ENCODE measurements at regions of chr20 and their contacts with region 1.

Region 1: DNA sequence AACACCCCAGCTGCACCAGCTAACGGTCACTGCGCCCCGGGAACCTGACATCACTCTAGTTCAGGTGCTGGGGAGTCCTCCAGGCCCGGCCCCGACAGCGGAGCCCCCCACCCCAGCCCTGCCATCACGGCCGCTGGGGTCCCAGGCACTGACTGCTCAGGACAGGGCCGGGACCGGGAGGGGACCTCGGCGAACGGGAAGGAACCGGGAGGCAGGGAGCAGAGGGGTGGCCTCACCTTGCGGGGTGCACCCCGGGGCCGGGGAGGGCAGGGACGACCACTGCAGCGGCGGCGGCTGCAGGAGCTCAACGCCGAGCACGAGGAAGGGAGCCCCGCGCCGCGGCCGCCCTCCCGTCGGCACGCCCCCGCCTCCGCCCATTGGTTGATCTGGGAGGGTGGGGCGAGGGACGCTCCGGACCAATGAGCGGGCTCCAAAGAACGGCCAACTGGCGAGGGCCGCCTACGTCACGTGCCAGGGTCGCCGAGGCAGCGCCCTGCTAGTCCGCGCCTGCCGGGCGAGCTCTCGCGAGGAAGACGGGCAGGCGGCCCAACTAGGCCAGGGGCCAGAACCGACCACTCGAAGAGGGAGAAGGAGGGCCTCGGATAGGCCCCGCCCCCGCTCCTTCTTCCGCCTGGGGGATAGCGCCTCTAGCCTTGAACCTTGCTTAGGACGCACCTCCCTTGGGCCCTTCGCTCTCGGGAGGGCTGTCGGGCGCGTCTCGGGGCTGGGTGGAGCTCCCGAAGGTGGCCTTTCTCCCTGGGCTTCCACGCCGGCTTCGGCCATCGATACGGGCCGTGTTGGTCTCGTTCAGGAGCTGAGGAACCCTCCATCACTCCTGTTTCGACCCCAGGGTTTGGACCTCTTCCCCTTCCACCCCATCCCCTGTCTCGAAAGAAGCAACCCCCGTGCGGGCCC is at the start of gene ADISSP:
- DNase-seq: peak; percentile 98
- H3K4me3 Mint-ChIP-seq: peak within 1 kb of the TSS; percentile 87
- H3K27ac Mint-ChIP-seq: peak within 1 kb of the TSS; percentile 92
- H3K4me1 Mint-ChIP-seq: peaks cover 20% of the 10 kb centered on the region
- H3K27me3 Mint-ChIP-seq: peaks cover 9% of the 10 kb centered on the region
- total RNA-seq, gene ADISSP: 55.5 and 64.6 TPM in 2 replicates

Region 2: DNA sequence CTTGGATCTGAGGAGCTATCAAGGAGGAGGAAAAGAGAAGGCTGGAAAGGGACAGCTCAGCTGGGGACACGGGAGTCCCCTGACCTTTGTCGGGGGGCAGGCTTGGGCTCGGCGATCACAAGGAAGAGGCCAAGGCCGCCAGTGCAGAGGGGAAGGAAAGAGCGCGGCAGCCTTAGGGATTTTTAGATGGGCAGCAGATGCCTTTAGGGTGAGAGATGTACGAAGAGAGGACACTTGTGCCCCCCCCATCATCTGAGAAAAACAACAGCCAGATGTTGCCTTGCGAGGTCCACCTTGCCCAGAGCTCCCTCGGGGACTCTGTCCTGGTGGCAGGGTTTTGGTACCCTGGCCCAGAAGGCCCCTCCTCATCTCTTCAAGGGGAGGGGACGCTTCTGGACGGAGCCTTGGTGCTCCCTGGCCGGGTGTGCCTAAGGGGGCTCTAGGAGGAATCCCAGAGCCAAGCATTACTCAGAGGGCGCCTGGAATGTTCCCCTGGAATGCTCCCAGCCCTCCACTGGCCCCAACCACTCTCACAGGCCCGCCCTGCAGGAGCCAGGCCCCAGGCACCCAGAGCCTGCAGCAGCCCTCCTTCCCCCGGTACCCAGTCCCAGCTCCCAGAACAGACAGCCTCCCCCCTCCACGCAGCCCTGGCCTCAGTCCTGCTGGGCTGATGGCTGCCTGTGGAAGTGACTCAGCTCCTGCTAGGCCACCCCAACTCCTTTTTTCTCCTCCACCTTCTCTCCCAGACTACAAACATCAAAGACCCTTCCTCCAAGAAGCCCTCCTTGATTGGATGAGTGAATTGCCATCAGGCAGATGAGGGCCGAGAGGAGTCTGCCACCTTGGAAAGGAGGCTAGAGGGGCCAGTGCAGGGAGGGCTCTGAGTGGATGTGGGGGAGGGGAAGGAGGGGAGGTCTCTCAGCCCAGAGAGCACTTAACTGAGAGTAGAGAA is 87.7 kb before region 1 on chr20:
- intact Hi-C with region 1: loop called (anchors 1 kb)
- DNase-seq: no peak
- H3K4me3 Mint-ChIP-seq: no peak overlapping the region
- H3K27ac Mint-ChIP-seq: no peak overlapping the region
- H3K4me1 Mint-ChIP-seq: peaks cover 5% of the 10 kb centered on the region
- H3K27me3 Mint-ChIP-seq: peaks cover 58% of the 10 kb centered on the region

Region 3: GRCh38 chr20:3706774-3707507 is 60.7 kb before region 1 on chr20:
- intact Hi-C with region 1: no loop called
- DNase-seq: no peak
- H3K4me3 Mint-ChIP-seq: no peak overlapping the region
- H3K27ac Mint-ChIP-seq: no peak overlapping the region
- H3K4me1 Mint-ChIP-seq: no peaks in the 10 kb centered on the region
- H3K27me3 Mint-ChIP-seq: peaks cover 4% of the 10 kb centered on the region

Region 4: GRCh38 chr20:3781153-3781910 is 13.6 kb after region 1 on chr20 and contains the start of gene SPEF1:
- intact Hi-C with region 1: loop called (anchors 1 kb)
- DNase-seq: no peak
- H3K4me3 Mint-ChIP-seq: peak within 1 kb of the TSS; percentile 64
- H3K27ac Mint-ChIP-seq: no peak within 1 kb of the TSS
- H3K4me1 Mint-ChIP-seq: peaks cover 43% of the 10 kb centered on the region
- H3K27me3 Mint-ChIP-seq: peaks cover 24% of the 10 kb centered on the region
- total RNA-seq, gene SPEF1: 0.12 TPM in 1 of 2 replicates, not detected in the other

Region 5: DNA sequence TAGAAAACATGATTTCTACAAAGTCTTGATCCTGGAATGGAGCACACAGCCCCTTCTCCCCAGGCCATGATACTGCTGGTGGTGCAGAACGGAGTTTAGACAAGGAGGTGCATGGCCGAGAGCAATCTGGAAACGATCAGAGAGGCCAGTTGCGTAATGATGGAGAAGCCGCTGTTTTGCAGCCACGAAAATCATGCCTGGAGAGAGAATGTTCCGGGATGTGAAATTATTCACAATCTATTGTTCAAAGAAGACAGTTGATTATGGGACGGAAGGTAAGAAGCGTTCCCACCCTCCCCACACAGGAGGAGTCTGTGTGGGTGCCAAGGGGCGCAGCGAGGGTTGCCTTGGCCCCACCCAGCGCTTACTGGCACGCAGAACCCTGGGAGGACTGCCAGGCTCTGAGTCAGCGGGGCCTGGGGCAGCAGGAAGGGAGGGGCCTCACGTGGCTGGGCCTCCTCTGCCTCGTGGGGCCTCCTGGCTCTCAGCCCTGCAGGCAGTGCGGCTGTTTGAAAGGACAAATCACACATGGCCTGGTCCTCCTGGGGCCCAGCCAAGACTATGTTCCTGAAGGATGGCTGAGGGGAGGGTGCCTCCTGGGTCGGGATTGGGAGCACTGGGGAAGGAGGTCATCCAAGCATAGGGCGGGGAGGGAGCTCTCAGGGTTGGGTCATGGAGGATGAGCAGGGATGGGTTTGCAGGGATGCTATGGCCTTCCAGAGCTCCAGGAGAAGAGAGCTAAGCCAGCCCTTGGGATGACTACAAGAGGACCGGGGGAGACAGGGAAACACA is 44.0 kb after region 1 on chr20:
- intact Hi-C with region 1: loop called (anchors 2 kb)
- DNase-seq: peak; percentile 77
- H3K4me3 Mint-ChIP-seq: peak overlapping the region; percentile 75
- H3K27ac Mint-ChIP-seq: peak overlapping the region; percentile 92
- H3K4me1 Mint-ChIP-seq: peaks cover 65% of the 10 kb centered on the region
- H3K27me3 Mint-ChIP-seq: no peaks in the 10 kb centered on the region

Region 6: GRCh38 chr20:3888622-3889488 is 121.2 kb after region 1 on chr20 and contains the start of gene PANK2:
- intact Hi-C with region 1: loop called (anchors 1 kb)
- DNase-seq: peak; percentile 98
- H3K4me3 Mint-ChIP-seq: peak within 1 kb of the TSS; percentile 100
- H3K27ac Mint-ChIP-seq: peak within 1 kb of the TSS; percentile 98
- H3K4me1 Mint-ChIP-seq: peaks cover 44% of the 10 kb centered on the region
- H3K27me3 Mint-ChIP-seq: no peaks in the 10 kb centered on the region
- total RNA-seq, gene PANK2: 51.4 and 54.6 TPM in 2 replicates